ENCODE measurements at regions of chrX and their contacts with region 1.

Region 1: GRCh38 chrX:28158019-28158777 is 176.9 kb upstream of the DCAF8L1 start:
- DNase-seq: no peak
- ATAC-seq: no peak
- H3K4me3 Mint-ChIP-seq: no peak overlapping the region
- H3K27ac Mint-ChIP-seq: no peak overlapping the region
- H3K4me1 Mint-ChIP-seq: no peaks in the 10 kb centered on the region
- H3K27me3 Mint-ChIP-seq: no peaks in the 10 kb centered on the region
- CTCF ChIP-seq: no peak

Region 2: DNA sequence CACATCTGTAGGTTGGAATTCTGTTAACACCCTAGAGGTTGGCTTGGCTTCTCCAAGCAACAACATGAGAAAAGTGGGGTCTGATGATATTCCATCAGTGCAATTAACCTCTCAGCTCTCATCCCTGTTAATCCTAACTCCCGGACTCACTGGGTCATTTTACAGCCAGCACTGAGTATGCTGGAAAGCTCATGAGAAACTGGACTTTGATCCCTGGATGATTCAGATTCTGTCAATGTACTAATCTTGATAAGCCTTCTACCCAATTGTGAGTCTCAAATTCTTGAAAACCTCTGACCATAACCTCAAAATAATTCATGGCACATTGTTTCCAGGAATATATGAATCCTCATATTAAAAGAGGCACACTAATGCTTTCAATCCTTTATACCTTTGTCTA is 67.3 kb after region 1 on chrX:
- CTCF ChIA-PET with region 1: no interaction called
- POLR2A ChIA-PET with region 1: no interaction called
- intact Hi-C with region 1: loop called (anchors 10 kb)
- DNase-seq: no peak
- ATAC-seq: no peak
- H3K4me3 Mint-ChIP-seq: no peak overlapping the region
- H3K27ac Mint-ChIP-seq: no peak overlapping the region
- H3K4me1 Mint-ChIP-seq: no peaks in the 10 kb centered on the region
- H3K27me3 Mint-ChIP-seq: no peaks in the 10 kb centered on the region
- CTCF ChIP-seq: no peak